GM12878 (cell line): ENCODE measurements at regions of chr7 and their contacts with region 1.

Region 1: DNA sequence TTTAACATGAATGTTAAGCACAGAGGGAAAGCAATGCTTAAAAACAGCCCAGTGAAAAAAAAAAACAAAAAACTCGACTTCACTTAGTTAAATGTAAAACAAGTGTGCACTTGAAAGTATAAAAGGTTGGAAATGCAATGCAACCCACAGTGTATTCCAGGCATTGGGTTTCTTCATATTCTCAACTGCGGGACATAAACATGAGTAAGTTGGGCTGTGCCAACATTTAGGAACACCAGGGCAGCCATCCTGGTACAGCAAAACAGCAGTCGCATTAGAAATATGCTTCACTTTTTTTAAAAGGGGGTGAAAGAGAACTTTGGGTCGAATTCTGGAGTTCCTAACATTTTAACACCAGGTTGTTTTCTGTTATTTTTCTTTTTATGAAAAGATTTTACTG is 937 bp downstream of the STEAP1 start:
- DNase-seq: no peak
- ATAC-seq: no peak
- H3K4me3 ChIP-seq: no peak overlapping the region
- H3K27ac ChIP-seq: no peak overlapping the region
- H3K4me1 ChIP-seq: no peaks in the 10 kb centered on the region
- H3K27me3 ChIP-seq: no peaks in the 10 kb centered on the region
- CTCF ChIP-seq: no peak
- EP300 ChIP-seq: no peak
- POLR2A ChIP-seq: no peak
- RAD21 ChIP-seq: no peak

Region 2: GRCh38 chr7:90178679-90179278 is 23.6 kb after region 1 on chr7:
- CTCF ChIA-PET with region 1: interaction called, 7 read pairs
- POLR2A ChIA-PET with region 1: interaction called, 3 read pairs
- RAD21 ChIA-PET with region 1: interaction called, 5 read pairs
- SMC1A ChIA-PET with region 1: interaction called, 12 read pairs
- in situ Hi-C with region 1: no loop called
- intact Hi-C with region 1: loop called (anchors 2 kb)
- DNase-seq: peak; percentile 65
- ATAC-seq: peak; percentile 95
- H3K4me3 ChIP-seq: no peak overlapping the region
- H3K27ac ChIP-seq: peak overlapping the region; percentile 19
- H3K4me1 ChIP-seq: peaks cover 23% of the 10 kb centered on the region
- H3K27me3 ChIP-seq: no peaks in the 10 kb centered on the region
- CTCF ChIP-seq: no peak
- EP300 ChIP-seq: peak in 1 of 2 experiments; percentile 80; a peak in 1 of 4 replicates
- POLR2A ChIP-seq: no peak
- RAD21 ChIP-seq: no peak

Region 3: DNA sequence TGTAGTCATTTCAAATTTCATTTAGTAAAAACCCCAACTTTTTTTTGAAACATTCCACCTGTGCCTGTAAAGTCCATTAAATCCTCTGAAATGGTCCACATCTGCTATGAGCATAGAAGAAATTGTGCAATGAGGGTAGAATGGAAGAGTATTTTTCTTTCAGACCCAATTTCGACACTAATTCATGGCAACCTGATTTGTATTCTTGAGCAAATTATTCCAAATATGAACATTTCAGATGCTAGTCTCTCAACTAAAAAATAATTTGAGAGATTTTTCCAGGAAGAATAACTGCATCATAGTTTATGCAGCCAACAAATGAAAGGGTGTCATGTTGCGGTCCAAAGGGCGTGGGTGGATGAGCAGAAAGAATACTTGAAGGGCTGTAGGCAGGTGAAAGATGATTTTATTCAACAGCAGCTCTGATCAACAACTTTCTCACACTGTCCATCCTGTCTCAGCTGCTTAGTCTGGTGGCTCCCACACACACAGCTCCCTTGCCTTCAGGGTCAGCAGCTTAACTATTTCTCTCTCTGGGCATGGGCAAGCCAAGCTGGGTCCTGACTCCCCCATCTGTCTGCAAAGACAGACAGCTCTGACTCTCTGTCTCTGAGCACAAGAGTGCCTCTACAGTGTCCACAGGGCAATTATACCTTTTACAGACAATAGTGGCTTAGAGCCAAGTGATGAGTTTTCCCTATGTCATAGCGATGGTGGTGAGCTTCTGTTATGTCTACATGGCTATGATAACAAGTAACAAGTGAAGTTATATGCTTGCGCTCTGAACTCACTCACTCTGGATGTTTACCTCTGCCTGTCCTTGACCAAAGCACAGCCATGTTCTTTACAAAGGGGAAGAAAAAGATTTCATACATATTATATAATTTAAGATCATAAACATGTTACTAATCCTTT is 67.9 kb after region 1 on chr7:
- CTCF ChIA-PET with region 1: interaction called, 11 read pairs
- POLR2A ChIA-PET with region 1: interaction called, 4 read pairs
- RAD21 ChIA-PET with region 1: interaction called, 17 read pairs
- SMC1A ChIA-PET with region 1: interaction called, 5 read pairs
- in situ Hi-C with region 1: no loop called
- intact Hi-C with region 1: no loop called
- DNase-seq: no peak
- ATAC-seq: peak; percentile 75
- H3K4me3 ChIP-seq: no peak overlapping the region
- H3K27ac ChIP-seq: no peak overlapping the region
- H3K4me1 ChIP-seq: no peaks in the 10 kb centered on the region
- H3K27me3 ChIP-seq: no peaks in the 10 kb centered on the region
- CTCF ChIP-seq: no peak
- EP300 ChIP-seq: no peak
- POLR2A ChIP-seq: no peak
- RAD21 ChIP-seq: no peak

Region 4: DNA sequence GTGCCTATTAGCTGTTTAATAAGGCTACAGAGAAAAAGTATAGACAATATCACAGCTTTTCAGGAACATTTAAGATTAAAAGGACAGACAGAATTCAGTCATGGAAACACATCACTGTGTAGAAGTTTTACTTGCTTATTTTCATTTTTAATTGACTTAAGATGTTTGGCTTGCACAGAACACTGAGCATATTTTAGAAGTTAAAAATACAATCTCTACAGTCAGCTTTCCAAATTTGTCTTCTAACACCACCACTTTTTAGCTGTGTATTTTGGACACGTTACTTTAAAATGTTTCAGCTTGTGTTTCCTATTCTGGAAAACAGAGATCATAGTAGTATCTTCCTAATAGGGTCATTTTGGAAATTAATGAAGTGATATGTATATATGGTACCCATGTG is 101.6 kb after region 1 on chr7:
- CTCF ChIA-PET with region 1: interaction called, 53 read pairs
- POLR2A ChIA-PET with region 1: interaction called, 4 read pairs
- RAD21 ChIA-PET with region 1: interaction called, 27 read pairs
- SMC1A ChIA-PET with region 1: interaction called, 39 read pairs
- in situ Hi-C with region 1: no loop called
- intact Hi-C with region 1: no loop called
- DNase-seq: no peak
- ATAC-seq: no peak
- H3K4me3 ChIP-seq: no peak overlapping the region
- H3K27ac ChIP-seq: no peak overlapping the region
- H3K4me1 ChIP-seq: no peaks in the 10 kb centered on the region
- H3K27me3 ChIP-seq: no peaks in the 10 kb centered on the region
- CTCF ChIP-seq: no peak
- EP300 ChIP-seq: no peak
- POLR2A ChIP-seq: no peak
- RAD21 ChIP-seq: no peak

Region 5: GRCh38 chr7:90312745-90313144 is 157.5 kb after region 1 on chr7:
- CTCF ChIA-PET with region 1: interaction called, 17 read pairs
- POLR2A ChIA-PET with region 1: no interaction called
- RAD21 ChIA-PET with region 1: interaction called, 3 read pairs
- SMC1A ChIA-PET with region 1: interaction called, 5 read pairs
- in situ Hi-C with region 1: no loop called
- intact Hi-C with region 1: no loop called
- DNase-seq: no peak
- ATAC-seq: peak; percentile 73
- H3K4me3 ChIP-seq: no peak overlapping the region
- H3K27ac ChIP-seq: no peak overlapping the region
- H3K4me1 ChIP-seq: no peaks in the 10 kb centered on the region
- H3K27me3 ChIP-seq: no peaks in the 10 kb centered on the region
- CTCF ChIP-seq: peak; percentile 23 to 42 (median 32); a peak in 3 of 6 replicates
- EP300 ChIP-seq: no peak
- POLR2A ChIP-seq: no peak
- RAD21 ChIP-seq: peak; percentile 42

Region 6: DNA sequence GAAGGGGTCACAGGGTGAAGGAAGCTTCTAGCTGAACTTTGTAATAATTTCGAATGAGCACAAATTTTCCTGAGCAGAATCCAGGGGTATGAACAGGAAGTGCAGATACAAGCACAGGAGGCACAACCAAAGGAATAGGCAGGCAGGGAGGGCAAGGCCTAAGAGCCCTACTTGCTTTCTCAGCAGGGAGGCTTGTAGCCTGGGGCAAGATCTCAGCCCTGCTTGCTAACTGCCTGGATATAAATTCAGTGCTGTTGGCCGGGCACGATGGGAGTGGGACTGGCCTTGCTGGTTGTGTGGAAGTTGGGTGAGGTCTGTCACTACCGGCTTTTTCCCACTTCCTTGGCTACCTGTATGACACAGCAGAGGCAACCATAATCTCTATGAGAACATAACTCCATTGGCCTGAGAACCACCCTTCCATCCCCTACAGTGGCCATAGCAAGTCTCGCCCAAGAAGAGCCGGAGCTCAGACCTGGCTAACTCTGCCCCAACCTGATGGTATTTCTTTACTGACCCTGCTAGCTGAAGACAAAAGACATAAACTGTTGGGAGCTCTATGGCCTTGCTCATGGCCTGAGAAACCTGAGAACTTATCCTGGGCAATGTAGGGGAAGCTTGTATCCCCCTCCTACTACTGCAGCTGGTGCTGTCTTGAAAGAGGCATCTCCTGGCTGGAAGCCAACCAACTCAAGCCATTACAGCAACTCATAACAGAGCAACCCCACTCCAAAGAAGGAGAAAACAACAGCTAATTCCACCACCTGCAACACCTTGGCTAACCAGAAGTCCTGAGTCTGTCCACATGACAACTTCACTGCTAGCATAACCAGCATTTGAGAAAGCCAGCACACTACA is 275.6 kb after region 1 on chr7:
- CTCF ChIA-PET with region 1: interaction called, 55 read pairs
- POLR2A ChIA-PET with region 1: no interaction called
- RAD21 ChIA-PET with region 1: interaction called, 31 read pairs
- SMC1A ChIA-PET with region 1: interaction called, 39 read pairs
- in situ Hi-C with region 1: loop called (anchors 5 kb)
- intact Hi-C with region 1: loop called (anchors 1 kb)
- DNase-seq: no peak
- ATAC-seq: no peak
- H3K4me3 ChIP-seq: no peak overlapping the region
- H3K27ac ChIP-seq: no peak overlapping the region
- H3K4me1 ChIP-seq: no peaks in the 10 kb centered on the region
- H3K27me3 ChIP-seq: no peaks in the 10 kb centered on the region
- CTCF ChIP-seq: no peak
- EP300 ChIP-seq: no peak
- POLR2A ChIP-seq: no peak
- RAD21 ChIP-seq: no peak